ENCODE measurements at regions of chr12 and their contacts with region 1.

Region 1: GRCh38 chr12:57452937-57453509 is 2.1 kb upstream of the INHBE start:
- DNase-seq: peak; percentile 78
- H3K4me3 Mint-ChIP-seq: no peak overlapping the region
- H3K27ac Mint-ChIP-seq: no peak overlapping the region
- H3K4me1 Mint-ChIP-seq: peaks cover 29% of the 10 kb centered on the region
- H3K27me3 Mint-ChIP-seq: no peaks in the 10 kb centered on the region
- CTCF ChIP-seq: peak; percentile 88

Region 2: DNA sequence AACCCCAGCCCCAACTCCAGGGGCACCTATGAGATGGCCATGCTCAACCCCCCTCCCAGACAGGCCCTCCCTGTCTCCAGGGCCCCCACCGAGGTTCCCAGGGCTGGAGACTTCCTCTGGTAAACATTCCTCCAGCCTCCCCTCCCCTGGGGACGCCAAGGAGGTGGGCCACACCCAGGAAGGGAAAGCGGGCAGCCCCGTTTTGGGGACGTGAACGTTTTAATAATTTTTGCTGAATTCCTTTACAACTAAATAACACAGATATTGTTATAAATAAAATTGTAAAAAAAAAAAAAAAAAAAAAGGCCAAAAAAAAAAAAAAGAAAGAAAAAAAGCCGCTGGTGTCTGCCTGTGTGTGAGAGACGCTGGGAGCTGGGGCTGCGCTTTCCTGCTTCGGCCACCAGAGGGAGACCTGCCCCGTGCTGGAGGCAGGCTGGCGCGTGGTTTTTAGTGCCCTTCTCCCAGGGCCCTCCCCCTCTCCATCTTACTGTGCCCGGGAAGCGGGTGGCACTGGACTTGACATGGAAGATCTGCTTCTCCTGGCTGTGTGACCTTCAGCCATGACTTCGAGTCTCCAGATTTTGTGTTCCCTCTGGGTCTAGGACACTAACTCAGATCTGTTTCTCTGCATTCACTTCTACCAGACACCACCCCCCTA is 239.8 kb before region 1 on chr12:
- CTCF ChIA-PET with region 1: interaction called, 39 read pairs
- POLR2A ChIA-PET with region 1: no interaction called
- intact Hi-C with region 1: loop called (anchors 2 kb)
- DNase-seq: peak; percentile 82
- H3K4me3 Mint-ChIP-seq: no peak overlapping the region
- H3K27ac Mint-ChIP-seq: no peak overlapping the region
- H3K4me1 Mint-ChIP-seq: peaks cover 20% of the 10 kb centered on the region
- H3K27me3 Mint-ChIP-seq: peaks cover 30% of the 10 kb centered on the region
- CTCF ChIP-seq: peak; percentile 92

Region 3: GRCh38 chr12:57272337-57273151 is 180.5 kb before region 1 on chr12:
- CTCF ChIA-PET with region 1: interaction called, 139 read pairs
- POLR2A ChIA-PET with region 1: no interaction called
- intact Hi-C with region 1: no loop called
- DNase-seq: no peak
- H3K4me3 Mint-ChIP-seq: no peak overlapping the region
- H3K27ac Mint-ChIP-seq: no peak overlapping the region
- H3K4me1 Mint-ChIP-seq: no peaks in the 10 kb centered on the region
- H3K27me3 Mint-ChIP-seq: no peaks in the 10 kb centered on the region
- CTCF ChIP-seq: no peak

Region 4: GRCh38 chr12:57309420-57309819 is 143.6 kb before region 1 on chr12:
- CTCF ChIA-PET with region 1: interaction called, 178 read pairs
- POLR2A ChIA-PET with region 1: interaction called, 13 read pairs
- intact Hi-C with region 1: loop called (anchors 1 kb)
- DNase-seq: no peak
- H3K4me3 Mint-ChIP-seq: no peak overlapping the region
- H3K27ac Mint-ChIP-seq: peak overlapping the region; percentile 66
- H3K4me1 Mint-ChIP-seq: peaks cover 13% of the 10 kb centered on the region
- H3K27me3 Mint-ChIP-seq: no peaks in the 10 kb centered on the region
- CTCF ChIP-seq: no peak

Region 5: DNA sequence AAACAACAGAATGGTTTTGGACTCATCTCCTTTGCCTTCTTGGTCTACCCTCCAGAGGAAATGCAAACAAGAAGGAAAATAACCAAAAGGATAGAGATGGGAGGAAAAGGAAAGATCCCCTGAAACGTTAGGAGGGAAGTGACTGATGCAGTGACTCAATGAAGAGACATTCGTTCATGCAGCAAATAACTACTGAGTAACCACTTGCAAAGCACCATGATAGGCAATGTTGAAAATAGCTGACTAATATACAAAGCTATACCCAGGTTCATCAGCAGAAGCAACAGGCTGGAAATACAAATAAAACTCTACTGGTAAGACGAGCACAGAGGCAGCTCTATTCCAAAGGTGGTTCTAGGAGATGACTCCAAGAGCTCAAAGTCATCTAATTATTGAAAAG is 64.0 kb before region 1 on chr12:
- CTCF ChIA-PET with region 1: interaction called, 11 read pairs
- POLR2A ChIA-PET with region 1: no interaction called
- intact Hi-C with region 1: no loop called
- DNase-seq: peak; percentile 53
- H3K4me3 Mint-ChIP-seq: no peak overlapping the region
- H3K27ac Mint-ChIP-seq: no peak overlapping the region
- H3K4me1 Mint-ChIP-seq: peaks cover 15% of the 10 kb centered on the region
- H3K27me3 Mint-ChIP-seq: no peaks in the 10 kb centered on the region
- CTCF ChIP-seq: no peak

Region 6: GRCh38 chr12:57430931-57431720 is 21.9 kb before region 1 on chr12 and contains the start of gene R3HDM2:
- CTCF ChIA-PET with region 1: interaction called, 18 read pairs
- POLR2A ChIA-PET with region 1: interaction called, 7 read pairs
- intact Hi-C with region 1: no loop called
- DNase-seq: peak; percentile 93
- H3K4me3 Mint-ChIP-seq: peak within 1 kb of the TSS; percentile 81
- H3K27ac Mint-ChIP-seq: peak within 1 kb of the TSS; percentile 95
- H3K4me1 Mint-ChIP-seq: peaks cover 6% of the 10 kb centered on the region
- H3K27me3 Mint-ChIP-seq: no peaks in the 10 kb centered on the region
- CTCF ChIP-seq: no peak
- total RNA-seq, gene R3HDM2: 53.9 and 64.8 TPM in 2 replicates

Region 7: GRCh38 chr12:57782608-57783465 is 329.8 kb after region 1 on chr12 and contains the start of gene TSFM:
- CTCF ChIA-PET with region 1: no interaction called
- POLR2A ChIA-PET with region 1: no interaction called
- intact Hi-C with region 1: no loop called
- DNase-seq: peak; percentile 95
- H3K4me3 Mint-ChIP-seq: peak within 1 kb of the TSS; percentile 98
- H3K27ac Mint-ChIP-seq: peak within 1 kb of the TSS; percentile 86
- H3K4me1 Mint-ChIP-seq: peaks cover 25% of the 10 kb centered on the region
- H3K27me3 Mint-ChIP-seq: no peaks in the 10 kb centered on the region
- CTCF ChIP-seq: peak; percentile 90
- total RNA-seq, gene TSFM: 28.4 and 32.6 TPM in 2 replicates

Measured in MCF 10A (cell line).